KBM-7 (cell line): ENCODE measurements at regions of chr11 and their contacts with region 1.

Region 1: DNA sequence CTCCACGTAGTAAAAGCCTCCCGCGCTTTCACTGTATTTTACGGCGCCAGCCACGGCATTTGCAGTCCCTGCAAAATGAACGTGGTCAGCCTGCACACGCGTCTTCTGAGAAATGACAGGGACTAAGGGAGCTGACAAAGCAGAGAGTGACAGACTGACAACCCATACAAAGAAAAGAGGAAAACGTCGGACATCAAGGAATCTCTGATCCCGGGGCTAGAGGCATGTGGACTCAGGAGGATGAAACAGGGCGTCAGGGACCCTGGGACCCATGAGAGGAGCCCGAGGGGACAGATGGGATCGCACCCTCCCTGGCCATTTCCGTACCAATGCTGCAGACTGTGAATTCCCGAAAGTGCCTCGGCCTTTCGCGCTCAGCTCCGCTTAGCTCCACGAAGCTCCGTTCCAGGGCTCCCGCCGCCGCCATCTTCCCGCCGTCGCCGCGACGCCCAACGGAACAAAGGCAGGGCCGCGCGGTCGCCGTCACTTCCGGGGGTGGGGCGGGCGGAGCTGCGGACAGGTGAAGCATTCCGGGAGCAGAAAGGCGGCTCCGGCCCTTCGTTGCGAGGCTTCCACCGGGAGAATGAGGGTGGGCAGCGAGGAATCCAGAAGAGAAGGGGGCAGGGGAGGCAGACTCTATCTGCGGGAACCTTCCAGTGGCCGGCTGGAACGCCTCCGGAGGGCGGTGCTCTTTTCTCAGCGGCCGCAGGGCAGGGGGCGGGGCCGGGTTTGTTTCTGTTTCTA is at the start of gene NUP160:
- DNase-seq: peak; percentile 84

Region 2: GRCh38 chr11:47642099-47642855 is 205.8 kb before region 1 on chr11 and contains the start of gene MTCH2:
- in situ Hi-C with region 1: loop called (anchors 25 kb)
- DNase-seq: peak; percentile 98

Region 3: DNA sequence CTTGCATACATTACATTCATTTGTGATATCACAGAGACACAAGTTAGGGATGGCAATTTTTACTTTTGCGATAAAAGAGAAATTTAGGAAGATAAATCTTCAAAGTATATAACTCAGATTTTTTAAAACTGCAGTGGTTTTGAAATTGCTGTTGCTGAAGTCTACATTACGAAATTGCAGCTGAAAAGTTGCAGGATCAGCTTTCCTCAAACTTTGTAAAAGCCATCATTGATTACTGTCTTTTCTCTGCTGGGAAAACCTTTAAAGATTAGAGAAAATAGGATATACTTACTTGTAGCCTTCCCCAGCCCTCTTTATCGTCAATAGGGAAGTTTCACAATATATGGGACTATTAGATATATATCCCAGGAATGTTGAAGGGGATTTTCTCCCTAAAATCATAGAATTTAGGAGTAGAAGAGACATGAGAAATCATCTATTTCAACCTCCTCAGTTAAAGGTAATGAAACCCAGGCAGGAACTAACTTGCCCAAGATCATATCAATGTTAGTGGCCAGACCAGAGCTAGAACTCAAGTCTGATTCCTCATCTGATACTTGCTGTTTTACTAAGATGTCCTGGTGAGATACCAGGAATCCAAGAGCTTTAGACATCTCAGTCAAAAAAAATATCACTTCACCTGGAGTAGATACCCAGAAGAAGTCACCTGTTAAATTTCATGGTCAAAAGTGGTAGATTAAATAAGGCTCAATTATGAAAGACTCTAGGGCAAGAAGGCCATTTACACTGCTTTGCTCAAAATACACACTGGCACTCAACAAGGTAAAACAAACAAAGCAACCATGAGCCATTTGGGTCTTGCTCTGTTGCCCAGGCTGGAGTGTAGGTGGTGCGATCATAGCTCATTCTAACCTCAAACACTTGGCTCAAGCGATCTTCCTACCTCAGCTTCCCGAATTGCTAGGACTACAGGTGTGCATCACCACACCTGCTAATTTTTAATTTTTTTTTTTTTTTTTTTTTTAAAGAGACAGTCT is 122.3 kb before region 1 on chr11:
- in situ Hi-C with region 1: loop called (anchors 25 kb)
- DNase-seq: no peak